ENCODE measurements at regions of chr9 and their contacts with region 1.

Region 1: GRCh38 chr9:33024966-33025571 is at the start of gene DNAJA1:
- DNase-seq: peak; percentile 79 to 96
- H3K4me3 ChIP-seq: peak within 1 kb of the TSS; percentile 77 to 95
- H3K27ac ChIP-seq: peak within 1 kb of the TSS; percentile 95 to 99
- H3K4me1 ChIP-seq: peaks cover 3 to 28% of the 10 kb centered on the region in 2 donors
- H3K27me3 ChIP-seq: no peaks in the 10 kb centered on the region
- CTCF ChIP-seq: no peak
- total RNA-seq, gene DNAJA1: 53.6 TPM

Region 2: DNA sequence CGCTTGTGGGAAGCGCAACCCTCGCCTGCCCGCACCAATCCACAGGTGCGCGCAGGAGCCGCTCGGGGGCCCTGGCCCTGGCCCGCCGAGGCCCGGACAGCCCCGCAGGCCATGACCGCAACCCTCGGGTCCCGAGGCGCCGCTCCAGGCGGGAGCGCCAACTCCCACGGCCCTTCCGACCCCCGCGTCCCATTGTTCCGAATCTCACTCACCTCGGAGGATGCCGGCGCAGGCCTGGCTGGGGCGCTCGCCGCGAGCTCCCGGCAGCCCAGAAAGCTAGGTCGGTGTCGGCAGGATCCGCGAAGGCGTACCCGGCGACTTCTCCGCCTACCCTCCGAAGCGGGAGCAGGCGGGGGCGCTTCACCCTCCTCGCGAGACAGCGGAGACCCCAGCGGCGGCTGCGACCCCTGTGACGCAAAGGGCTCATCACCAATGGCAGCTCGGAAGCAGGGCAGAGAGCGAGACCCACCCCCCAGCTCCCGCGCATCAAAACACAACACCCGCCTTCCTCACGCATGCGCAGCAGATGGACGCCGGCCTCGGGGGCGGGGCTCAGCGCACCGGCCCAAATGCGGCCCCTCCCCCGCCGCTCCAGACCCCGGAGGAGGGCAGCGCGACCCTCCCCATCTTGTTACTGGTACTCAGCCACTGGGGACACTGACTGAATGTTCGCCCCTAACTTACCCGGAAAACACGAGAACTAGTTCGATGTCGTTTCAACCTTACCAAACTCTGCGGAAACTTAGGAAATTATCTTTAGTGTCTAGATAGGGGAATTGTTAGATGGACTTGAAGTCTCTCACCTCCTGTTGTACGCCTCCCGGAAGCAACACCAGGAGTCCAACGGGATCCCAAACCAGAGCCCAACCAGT is 474.3 kb before region 1 on chr9:
- intact Hi-C with region 1: loop called (anchors 10 kb)
- DNase-seq: peak; percentile 81 to 97
- H3K4me3 ChIP-seq: peak overlapping the region; percentile 67 to 80
- H3K27ac ChIP-seq: peak overlapping the region; percentile 80 to 90
- H3K4me1 ChIP-seq: peaks cover 0 to 16% of the 10 kb centered on the region in 2 donors
- H3K27me3 ChIP-seq: no peaks in the 10 kb centered on the region
- CTCF ChIP-seq: peak in 1 of 3 experiments; percentile 24

Region 3: DNA sequence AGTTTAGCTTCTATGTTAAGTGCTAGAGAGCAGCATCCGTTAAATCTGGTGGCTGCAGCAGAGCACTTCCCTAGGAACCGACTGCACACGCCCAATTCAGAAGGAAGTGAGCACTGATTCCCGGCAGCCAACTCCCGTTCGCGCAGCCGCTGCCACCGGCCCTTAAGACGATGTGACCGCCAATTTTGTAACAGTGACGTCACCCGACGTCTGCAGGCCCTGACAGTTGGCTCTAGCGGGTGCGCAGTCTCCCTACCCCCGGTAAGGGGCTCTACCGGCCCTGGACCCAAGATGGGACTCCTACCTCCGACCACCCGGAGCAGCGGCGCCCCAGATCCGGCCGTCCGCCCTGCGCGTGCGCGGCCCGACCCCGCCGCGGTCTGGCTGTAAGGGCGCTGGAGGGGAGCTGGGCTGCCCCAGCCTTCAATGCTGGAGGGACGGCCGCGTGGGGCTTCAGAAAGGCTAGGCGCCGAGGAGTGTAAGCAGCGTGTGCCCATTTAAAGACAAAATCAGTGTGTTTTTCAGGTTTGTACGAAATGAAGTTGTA is 19.1 kb after region 1 on chr9:
- intact Hi-C with region 1: loop called (anchors 1 kb)
- DNase-seq: peak; percentile 71 to 95
- H3K4me3 ChIP-seq: peak overlapping the region; percentile 71 to 77
- H3K27ac ChIP-seq: peak overlapping the region; percentile 97 to 98
- H3K4me1 ChIP-seq: peaks cover 0 to 3% of the 10 kb centered on the region in 2 donors
- H3K27me3 ChIP-seq: no peaks in the 10 kb centered on the region
- CTCF ChIP-seq: no peak

Region 4: GRCh38 chr9:33076358-33077004 is 51.4 kb after region 1 on chr9 and contains the start of gene SMU1:
- intact Hi-C with region 1: loop called (anchors 5 kb)
- DNase-seq: peak; percentile 94 to 99
- H3K4me3 ChIP-seq: peak within 1 kb of the TSS; percentile 83 to 94
- H3K27ac ChIP-seq: peak within 1 kb of the TSS; percentile 94 to 97
- H3K4me1 ChIP-seq: peaks cover 1 to 11% of the 10 kb centered on the region in 2 donors
- H3K27me3 ChIP-seq: no peaks in the 10 kb centered on the region
- CTCF ChIP-seq: no peak
- total RNA-seq, gene SMU1: 7.2 TPM

Region 5: DNA sequence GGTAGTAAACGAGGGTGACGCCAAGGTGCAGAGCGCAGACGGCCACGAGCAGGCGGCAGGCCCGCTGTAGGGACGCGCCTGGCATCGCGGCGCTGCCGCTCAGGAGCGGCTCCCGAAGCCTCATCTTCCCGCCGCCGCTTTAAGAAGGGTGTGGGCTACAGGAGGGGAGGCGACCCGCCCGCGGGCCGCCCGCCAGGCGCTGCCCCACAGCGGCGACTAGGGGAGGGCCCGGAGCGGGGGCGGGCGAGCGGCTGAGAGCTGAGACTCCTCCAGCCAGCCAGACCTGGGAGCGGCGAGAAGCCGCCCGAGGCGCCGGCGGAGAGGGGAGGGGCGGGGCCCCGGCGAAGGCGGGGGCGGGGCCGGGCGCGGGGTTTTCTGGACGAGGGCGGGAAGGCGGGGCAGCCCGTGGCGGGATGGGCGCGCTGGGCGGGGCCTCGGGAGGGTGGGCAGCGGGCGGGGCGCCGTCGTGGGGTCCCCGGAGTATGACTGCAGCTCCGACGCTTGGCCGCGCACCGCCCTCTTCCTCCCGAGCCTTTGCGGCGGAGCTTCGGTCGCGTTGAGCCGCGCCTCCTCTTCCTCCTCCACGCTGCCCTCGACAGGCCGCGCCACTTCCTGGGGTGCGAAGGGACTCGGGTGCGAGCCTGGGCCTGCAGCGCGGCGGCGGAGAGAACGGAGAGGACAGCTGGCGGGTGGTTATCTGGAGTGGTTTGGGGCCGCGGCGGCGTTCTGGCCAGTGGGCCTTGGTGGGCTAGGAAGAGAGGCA is 142.2 kb after region 1 on chr9 and contains the start of gene B4GALT1:
- intact Hi-C with region 1: loop called (anchors 1 kb)
- DNase-seq: peak; percentile 82 to 98
- H3K4me3 ChIP-seq: peak within 1 kb of the TSS; percentile 85 to 90
- H3K27ac ChIP-seq: peak within 1 kb of the TSS; percentile 98 to 99
- H3K4me1 ChIP-seq: peaks cover 10 to 34% of the 10 kb centered on the region in 2 donors
- H3K27me3 ChIP-seq: no peaks in the 10 kb centered on the region
- CTCF ChIP-seq: no peak
- total RNA-seq, gene B4GALT1: 100 TPM

Region 6: DNA sequence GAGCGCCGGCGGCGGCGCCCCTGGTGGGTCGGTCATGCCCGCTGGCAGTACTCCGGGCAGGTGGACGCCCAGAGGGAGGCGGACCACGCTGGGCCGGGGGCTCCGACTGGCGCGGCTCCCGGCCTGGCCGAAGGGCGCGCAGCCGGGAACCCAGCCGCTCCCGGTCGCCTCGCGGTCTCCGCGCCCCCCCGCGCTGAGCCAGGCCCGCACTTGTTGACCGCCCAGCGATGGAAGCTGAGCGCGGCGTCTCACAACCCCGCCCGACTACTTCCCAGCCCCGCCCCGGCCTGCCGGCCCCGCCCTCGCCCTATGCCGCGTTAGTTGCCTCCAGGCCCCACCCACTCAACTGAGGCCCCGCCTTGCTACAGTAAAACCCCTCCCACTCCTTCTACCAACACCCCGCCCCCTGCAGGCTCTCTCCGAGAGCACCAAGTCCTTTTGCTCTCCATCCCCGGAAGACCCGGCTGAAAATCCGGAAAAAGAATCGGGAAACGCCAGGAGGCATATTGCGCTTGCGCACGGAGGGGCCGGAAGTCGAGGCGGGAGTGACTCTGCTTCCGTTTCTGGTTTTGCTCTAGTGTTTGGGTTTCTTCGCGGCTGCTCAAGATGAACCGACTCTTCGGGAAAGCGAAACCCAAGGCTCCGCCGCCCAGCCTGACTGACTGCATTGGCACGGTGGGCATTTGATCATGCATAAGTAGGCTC is 239.6 kb after region 1 on chr9 and contains the starts of genes BAG1 and CHMP5:
- intact Hi-C with region 1: loop called (anchors 1 kb)
- DNase-seq: peak; percentile 98 to 100
- H3K4me3 ChIP-seq: peak within 1 kb of the TSS; percentile 90 to 95
- H3K27ac ChIP-seq: peak within 1 kb of the TSS; percentile 90 to 92
- H3K4me1 ChIP-seq: peaks cover 7 to 9% of the 10 kb centered on the region in 2 donors
- H3K27me3 ChIP-seq: no peaks in the 10 kb centered on the region
- CTCF ChIP-seq: peak in 1 of 3 experiments; percentile 37
- total RNA-seq, gene BAG1: 58.5 TPM
- total RNA-seq, gene CHMP5: 47.5 TPM

Region 7: DNA sequence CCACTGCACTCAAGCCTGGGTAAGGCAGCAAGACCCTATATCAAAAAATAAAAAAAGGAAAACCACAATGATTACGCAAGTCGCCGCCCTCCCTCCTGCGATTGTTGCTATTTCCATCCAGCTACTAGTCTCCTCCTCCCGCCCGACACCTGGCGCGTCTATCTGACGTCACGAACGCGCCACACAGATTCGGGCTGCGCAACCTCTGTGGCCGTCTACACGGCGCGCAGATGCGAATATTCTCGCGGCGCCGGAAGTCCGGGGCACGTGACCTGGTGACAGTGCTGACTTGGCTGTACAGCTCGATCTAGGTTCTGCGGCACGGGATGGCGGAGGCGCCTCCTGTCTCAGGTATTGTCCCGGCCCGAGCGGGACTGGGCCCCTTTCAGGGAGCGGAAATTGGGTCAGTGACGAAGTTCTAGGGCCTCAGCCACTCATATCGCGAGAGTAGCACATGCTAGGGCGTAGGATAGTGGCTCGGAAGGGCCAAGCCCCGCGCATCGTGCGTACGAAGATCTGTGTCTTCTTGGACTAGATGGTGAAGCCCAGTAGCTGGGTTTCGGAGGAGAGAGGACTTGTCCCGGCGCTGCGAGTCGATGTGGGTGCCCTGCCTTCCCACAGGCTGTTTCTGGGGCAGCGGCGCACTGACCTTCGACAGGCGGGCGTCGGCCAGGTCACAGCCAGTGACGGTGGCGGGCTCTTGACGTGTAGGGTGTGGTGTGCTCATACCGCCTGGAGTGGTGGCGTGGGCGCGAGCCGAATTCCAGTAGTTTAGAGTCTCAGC is 265.4 kb after region 1 on chr9 and contains the start of gene NFX1:
- intact Hi-C with region 1: loop called (anchors 1 kb)
- DNase-seq: peak; percentile 97 to 99
- H3K4me3 ChIP-seq: peak within 1 kb of the TSS; percentile 83 to 95
- H3K27ac ChIP-seq: peak within 1 kb of the TSS; percentile 99
- H3K4me1 ChIP-seq: peaks cover 5 to 26% of the 10 kb centered on the region in 2 donors
- H3K27me3 ChIP-seq: no peaks in the 10 kb centered on the region
- CTCF ChIP-seq: no peak
- total RNA-seq, gene NFX1: 14.2 TPM